Activated CD4-positive, alpha-beta memory T cell treated with anti-CD3 and anti-CD28 coated beads for 36 hours (primary cell): ENCODE measurements at regions of chr14 and their contacts with region 1.

Region 1: DNA sequence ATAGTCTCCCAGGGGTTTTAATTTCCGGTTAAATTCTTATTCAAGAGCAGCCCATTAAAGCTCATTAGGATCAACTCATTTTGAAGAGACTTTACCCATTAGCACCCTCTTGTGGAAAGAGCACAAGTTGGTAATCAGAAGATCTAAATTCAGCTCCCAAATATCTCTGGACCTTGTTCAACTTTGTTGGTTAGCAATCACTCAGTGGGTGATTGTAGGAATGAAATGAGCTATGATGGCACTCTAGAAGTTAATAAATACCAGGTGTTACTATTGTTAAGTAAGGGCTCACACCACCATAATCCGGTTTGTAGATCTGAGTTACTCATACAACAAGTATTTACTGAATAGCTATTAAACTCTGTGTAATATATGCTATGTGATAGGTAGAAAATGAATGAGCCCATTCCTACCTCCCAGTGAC is 42.9 kb downstream of the TRIP11 start:
- DNase-seq: no peak
- H3K4me3 Mint-ChIP-seq: no peak overlapping the region
- H3K27ac Mint-ChIP-seq: no peak overlapping the region
- H3K4me1 Mint-ChIP-seq: peaks cover 42% of the 10 kb centered on the region
- H3K27me3 Mint-ChIP-seq: no peaks in the 10 kb centered on the region

Region 2: GRCh38 chr14:91911474-91912032 is 85.4 kb before region 1 on chr14:
- CTCF ChIA-PET with region 1: interaction called, 14 read pairs
- POLR2A ChIA-PET with region 1: no interaction called
- intact Hi-C with region 1: no loop called
- DNase-seq: peak; percentile 55
- H3K4me3 Mint-ChIP-seq: no peak overlapping the region
- H3K27ac Mint-ChIP-seq: no peak overlapping the region
- H3K4me1 Mint-ChIP-seq: peaks cover 5% of the 10 kb centered on the region
- H3K27me3 Mint-ChIP-seq: no peaks in the 10 kb centered on the region

Region 3: DNA sequence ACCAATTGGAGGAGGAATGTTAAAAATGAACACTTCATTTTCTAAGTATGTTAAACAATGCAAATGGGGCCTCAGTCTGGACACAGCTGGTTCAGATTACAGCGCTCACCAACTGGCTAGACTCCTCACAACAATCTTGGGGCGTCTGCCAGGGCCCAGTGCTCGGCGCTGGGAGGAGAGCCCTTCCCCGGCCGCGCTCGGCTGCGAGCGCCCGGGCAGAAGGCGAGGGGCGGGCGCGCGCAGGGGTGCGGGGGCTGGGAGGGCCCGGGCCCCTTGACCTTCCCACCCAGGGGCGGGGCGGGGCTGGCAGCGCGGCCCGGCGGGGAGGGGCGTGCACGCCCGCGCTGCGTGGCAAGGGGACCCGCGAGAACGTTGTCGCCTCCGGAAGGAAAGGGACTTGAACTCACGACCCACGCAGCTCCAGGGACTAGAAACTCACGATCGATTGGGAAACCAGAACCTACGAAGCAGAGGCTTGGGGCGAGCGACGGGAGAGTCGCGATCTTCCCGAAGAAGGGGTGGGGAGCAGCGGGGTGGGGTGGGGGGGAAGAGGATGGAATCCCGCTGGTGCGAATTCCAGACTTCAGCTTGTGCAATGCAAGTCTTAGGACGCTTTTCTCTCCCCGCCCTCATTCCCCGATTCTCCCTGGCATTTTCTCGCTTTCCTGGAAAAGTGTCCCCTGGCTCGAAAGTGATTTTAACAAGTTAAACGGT is 49.3 kb before region 1 on chr14 and contains the start of gene FBLN5:
- CTCF ChIA-PET with region 1: interaction called, 5 read pairs
- POLR2A ChIA-PET with region 1: no interaction called
- intact Hi-C with region 1: loop called (anchors 5 kb)
- DNase-seq: peak; percentile 46
- H3K4me3 Mint-ChIP-seq: peak within 1 kb of the TSS; percentile 70
- H3K27ac Mint-ChIP-seq: no peak within 1 kb of the TSS
- H3K4me1 Mint-ChIP-seq: peaks cover 13% of the 10 kb centered on the region
- H3K27me3 Mint-ChIP-seq: peaks cover 27% of the 10 kb centered on the region
- total RNA-seq, gene FBLN5: 1.9 TPM

Region 4: DNA sequence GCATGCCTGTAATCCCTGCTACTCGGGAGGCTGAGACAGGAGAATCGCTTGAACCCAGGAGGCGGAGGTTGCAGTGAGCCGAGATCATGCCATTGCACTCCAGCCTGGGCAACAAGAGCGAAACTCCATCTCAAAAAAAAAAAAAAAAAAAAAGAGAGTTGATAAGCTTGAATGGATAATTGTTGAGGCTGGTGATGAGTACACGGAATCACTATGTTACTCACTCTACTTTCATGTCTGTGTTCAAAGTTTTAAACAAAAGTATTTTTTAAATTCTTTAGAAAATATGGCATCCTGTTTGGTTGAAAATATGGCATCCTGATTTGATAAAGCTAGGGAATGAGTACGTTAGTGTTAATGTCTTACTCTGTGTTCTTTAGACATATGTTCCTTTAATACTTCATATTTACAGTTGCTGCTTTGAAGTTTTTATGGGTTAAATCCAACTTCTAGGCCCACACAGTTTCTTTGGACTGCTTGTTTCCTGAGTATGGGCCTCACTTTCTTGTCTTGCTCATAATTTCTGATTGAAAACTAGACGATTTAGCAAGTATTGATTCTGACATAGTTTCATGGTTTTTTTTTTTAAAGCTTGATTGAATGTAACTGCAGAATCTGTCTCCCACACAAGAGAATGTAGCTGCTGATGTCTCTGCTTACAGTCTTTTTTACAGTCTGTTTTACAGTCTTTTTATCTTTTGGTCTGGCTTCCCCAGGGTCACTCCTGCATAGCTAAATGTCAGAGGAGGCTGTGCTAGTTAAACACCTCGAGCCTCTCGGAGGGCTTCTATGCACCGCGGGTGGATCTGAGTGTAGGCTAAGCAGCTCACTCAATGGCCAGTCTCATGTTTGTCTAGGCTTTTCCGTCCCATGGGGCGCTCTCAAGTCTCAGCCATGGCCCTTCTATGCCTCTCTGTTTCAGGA is 35.4 kb before region 1 on chr14:
- CTCF ChIA-PET with region 1: interaction called, 14 read pairs
- POLR2A ChIA-PET with region 1: no interaction called
- intact Hi-C with region 1: no loop called
- DNase-seq: no peak
- H3K4me3 Mint-ChIP-seq: no peak overlapping the region
- H3K27ac Mint-ChIP-seq: peak overlapping the region; percentile 83
- H3K4me1 Mint-ChIP-seq: peaks cover 18% of the 10 kb centered on the region
- H3K27me3 Mint-ChIP-seq: peaks cover 2% of the 10 kb centered on the region

Region 5: GRCh38 chr14:91980127-91980741 is 16.7 kb before region 1 on chr14:
- CTCF ChIA-PET with region 1: interaction called, 17 read pairs
- POLR2A ChIA-PET with region 1: interaction called, 3 read pairs
- intact Hi-C with region 1: no loop called
- DNase-seq: no peak
- H3K4me3 Mint-ChIP-seq: no peak overlapping the region
- H3K27ac Mint-ChIP-seq: no peak overlapping the region
- H3K4me1 Mint-ChIP-seq: peaks cover 42% of the 10 kb centered on the region
- H3K27me3 Mint-ChIP-seq: no peaks in the 10 kb centered on the region

Region 6: GRCh38 chr14:91985521-91986255 is 11.3 kb before region 1 on chr14:
- CTCF ChIA-PET with region 1: interaction called, 17 read pairs
- POLR2A ChIA-PET with region 1: no interaction called
- intact Hi-C with region 1: no loop called
- DNase-seq: no peak
- H3K4me3 Mint-ChIP-seq: no peak overlapping the region
- H3K27ac Mint-ChIP-seq: no peak overlapping the region
- H3K4me1 Mint-ChIP-seq: peaks cover 10% of the 10 kb centered on the region
- H3K27me3 Mint-ChIP-seq: no peaks in the 10 kb centered on the region

Region 7: GRCh38 chr14:92014040-92014439 is 17.1 kb after region 1 on chr14:
- CTCF ChIA-PET with region 1: interaction called, 11 read pairs
- POLR2A ChIA-PET with region 1: no interaction called
- intact Hi-C with region 1: no loop called
- DNase-seq: no peak
- H3K4me3 Mint-ChIP-seq: no peak overlapping the region
- H3K27ac Mint-ChIP-seq: peak overlapping the region; percentile 73
- H3K4me1 Mint-ChIP-seq: peaks cover 29% of the 10 kb centered on the region
- H3K27me3 Mint-ChIP-seq: no peaks in the 10 kb centered on the region